Activated naive CD4-positive, alpha-beta T cell treated with anti-CD3 and anti-CD28 coated beads, Interleukin-2, amount 10 ng/mL, durations not matched to agents 7 days and 5 days (primary cell): ENCODE measurements at regions of chrX and their contacts with region 1.

Region 1: GRCh38 chrX:137194164-137194563 is 160.4 kb upstream of the GPR101 start:
- DNase-seq: peak; percentile 23
- H3K4me3 Mint-ChIP-seq: no peak overlapping the region
- H3K27ac Mint-ChIP-seq: no peak overlapping the region
- H3K4me1 Mint-ChIP-seq: no peaks in the 10 kb centered on the region
- H3K27me3 Mint-ChIP-seq: no peaks in the 10 kb centered on the region

Region 2: DNA sequence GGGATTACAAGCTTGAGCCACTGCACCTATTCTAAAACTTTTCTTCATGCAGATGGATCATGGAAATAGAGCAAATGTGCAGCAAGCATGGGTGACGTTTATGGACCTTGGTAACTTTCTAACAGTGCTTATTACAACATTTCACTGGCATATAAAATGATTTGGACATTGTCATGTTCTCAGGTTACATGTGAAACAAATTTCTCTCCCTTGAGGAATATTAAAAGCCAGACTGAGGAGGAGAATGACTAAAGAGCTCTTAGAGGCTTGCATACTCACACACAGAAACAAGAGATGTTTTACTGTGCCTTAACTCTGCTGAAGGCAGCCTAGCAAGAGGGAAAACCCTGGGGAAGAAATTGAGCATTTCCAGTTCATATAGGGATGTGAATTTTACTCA is 121.8 kb before region 1 on chrX:
- CTCF ChIA-PET with region 1: no interaction called
- DNase-seq: no peak
- H3K4me3 Mint-ChIP-seq: no peak overlapping the region
- H3K27ac Mint-ChIP-seq: no peak overlapping the region
- H3K4me1 Mint-ChIP-seq: no peaks in the 10 kb centered on the region
- H3K27me3 Mint-ChIP-seq: no peaks in the 10 kb centered on the region

Region 3: DNA sequence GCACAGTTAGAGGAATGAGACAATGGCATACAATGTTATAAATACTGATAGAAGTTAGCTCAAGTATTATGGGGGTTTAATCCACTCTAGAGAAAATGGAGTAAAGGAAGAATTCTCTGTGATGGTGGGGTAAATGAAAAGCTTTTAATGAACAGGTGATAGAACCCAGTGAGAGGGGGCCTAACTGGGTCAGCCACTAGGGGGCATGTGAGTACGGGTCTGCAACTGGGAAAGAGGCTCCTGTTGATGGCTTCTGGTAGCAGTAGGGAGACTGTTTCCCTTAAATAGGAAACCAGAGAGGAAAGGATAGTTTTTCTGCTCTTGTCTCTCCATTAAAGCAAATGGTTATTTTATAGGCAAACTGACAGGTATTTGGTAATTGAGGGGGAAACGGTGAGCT is 27.6 kb before region 1 on chrX:
- CTCF ChIA-PET with region 1: interaction called, 20 read pairs
- DNase-seq: peak; percentile 28
- H3K4me3 Mint-ChIP-seq: no peak overlapping the region
- H3K27ac Mint-ChIP-seq: no peak overlapping the region
- H3K4me1 Mint-ChIP-seq: no peaks in the 10 kb centered on the region
- H3K27me3 Mint-ChIP-seq: peaks cover 10% of the 10 kb centered on the region